ENCODE measurements at regions of chr17 and their contacts with region 1.

Region 1: DNA sequence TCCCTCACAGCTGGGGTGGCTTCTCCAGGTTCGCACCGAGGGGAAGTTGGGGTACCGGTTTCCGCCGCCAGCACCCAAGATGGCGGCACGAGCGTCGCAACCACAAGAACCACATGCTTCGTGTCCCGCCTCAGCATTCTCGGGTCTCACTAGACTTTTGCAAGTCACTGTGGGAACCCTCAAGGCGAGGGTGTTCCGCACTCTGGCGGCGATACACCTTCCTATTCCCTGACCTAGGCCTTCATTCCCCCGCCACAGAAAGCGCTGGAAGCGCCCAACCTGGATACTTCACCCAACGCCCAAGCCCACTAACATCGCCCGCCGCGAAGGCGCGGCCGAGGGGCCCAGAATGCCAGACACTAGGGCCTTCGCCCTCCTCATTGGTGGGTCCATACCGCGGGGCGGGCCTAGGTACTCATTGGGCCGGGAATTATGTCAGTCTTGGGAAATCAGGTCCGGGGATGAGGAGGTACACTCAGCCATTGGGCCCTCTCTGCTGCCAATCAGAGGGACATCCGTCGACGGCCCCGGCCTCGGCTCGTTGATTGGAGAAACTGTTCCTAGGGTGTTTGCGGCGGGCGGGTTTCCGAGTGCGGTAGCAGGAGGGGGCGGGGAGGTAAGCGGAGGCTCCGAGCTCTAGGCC is at the start of gene NFE2L1:
- DNase-seq: peak; percentile 97

Region 2: DNA sequence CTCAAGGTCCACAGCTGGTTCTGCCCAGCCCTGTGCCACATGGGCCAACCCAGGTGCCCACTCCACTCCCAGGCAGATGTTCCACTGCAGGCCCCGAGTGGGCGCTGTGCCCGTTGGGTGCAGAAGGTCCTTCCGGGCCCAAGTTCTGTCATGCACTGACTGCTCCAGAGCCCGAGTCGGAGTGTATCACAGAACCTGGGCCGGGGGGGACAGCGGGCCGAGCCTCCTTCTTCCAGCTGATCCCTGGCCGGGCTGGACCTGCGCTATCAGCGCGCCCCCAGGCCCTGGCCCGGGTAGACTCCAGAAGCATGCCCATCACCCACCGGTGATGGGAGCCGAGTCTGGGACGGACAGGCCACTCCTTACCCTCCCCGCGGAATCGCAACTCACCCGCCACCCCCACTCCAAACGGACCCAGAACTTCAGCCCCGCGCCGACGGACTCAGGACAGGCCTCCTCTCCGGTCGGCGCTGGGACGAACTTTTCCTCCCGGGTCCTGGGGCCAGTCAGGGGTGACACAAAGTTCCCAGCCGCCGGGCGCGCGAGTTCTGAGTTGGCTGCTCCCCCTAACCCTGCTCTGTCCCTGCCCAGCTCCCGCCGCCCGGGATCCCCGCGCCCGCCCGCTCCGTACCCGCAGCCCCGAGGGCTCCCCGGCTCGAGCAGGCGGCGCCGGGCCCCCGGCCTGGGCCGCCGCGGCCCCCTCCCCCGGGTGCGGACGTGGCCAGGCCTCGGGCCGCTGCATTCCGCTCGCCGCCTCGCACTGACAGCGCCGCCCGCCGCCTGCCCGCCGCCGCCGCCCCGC is 10.6 kb before region 1 on chr17 and contains the start of gene COPZ2:
- CTCF ChIA-PET with region 1: no interaction called
- POLR2A ChIA-PET with region 1: interaction called, 121 read pairs
- DNase-seq: no peak

Region 3: DNA sequence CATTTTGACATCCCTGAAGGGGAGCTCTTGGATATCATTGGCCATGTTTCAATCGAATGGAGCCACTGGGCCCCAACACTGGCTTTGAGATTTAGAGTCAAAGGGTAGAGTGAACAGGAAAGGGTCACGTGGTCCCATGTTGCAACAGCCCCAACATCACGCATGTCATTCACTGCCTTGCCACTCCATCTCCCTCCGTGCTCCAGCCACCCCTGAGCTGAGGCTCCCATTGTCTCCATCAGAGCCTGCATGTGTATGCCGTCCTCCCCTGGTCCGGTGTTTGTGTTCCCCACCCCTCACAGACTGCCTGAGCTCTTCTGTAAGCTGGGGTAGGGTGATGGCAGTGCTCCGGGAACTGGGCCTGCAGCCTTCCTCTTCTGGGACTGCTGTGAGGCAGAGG is 12.4 kb after region 1 on chr17:
- CTCF ChIA-PET with region 1: interaction called, 4 read pairs
- POLR2A ChIA-PET with region 1: interaction called, 64 read pairs
- DNase-seq: no peak

Region 4: DNA sequence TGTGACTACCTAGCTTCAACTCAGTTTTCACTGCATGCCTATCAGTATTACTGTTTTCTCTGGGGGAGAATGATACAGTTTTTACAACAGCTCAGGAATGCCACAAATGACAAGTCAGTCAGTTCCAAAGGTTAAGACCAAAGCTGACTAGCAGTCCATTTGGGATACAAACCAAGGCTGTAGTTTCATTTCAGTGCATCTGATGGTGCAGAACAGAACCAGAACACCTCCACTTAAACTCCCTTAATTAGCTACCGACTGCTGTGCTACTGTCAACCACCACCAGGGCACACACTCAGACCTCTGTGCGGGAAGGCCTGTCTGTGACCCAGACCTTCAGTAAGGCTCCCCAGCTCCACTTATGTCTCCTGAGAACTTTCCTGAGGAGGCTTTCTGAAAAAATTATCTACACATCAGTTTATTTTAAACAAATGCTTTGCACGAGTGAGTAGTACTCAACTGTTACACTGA is 20.7 kb after region 1 on chr17:
- CTCF ChIA-PET with region 1: no interaction called
- POLR2A ChIA-PET with region 1: interaction called, 64 read pairs
- DNase-seq: peak; percentile 58

Region 5: GRCh38 chr17:48084932-48085444 is 37.1 kb after region 1 on chr17:
- CTCF ChIA-PET with region 1: interaction called, 9 read pairs
- POLR2A ChIA-PET with region 1: interaction called, 10 read pairs
- DNase-seq: no peak

Region 6: DNA sequence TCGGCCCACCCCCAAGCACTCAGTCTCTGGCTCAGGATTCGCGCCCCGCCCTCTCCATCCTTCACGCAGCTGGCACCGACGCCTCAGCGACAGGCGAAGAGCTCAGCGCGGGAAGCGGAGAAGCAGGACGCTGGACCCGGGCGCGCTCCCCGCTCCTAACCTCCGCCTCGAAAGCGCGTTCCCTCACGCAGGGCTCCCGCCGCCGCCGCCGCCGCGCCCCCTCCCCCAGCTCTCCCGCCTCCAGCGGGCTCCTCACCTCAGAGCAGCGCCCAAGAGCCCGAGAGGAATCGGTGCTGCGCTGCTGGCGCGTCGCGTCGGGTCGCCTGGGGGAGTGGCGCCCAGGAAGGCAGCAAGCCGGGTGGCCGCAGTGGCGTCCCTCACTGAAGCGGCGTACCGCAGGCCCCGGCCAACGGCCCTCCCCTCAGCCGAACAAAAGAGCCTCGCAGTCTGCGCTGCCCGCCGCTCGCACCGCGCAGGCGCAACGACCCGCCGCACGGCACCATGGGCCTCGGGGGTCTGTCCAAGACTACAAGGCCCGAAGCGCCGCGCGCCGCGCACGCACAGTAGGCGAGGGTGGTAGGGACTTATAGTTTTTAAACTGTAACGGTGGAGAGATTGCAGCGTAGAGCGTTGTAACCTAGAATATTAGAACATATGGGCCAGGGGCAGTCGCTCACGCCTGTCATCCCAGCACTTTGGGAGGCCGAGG is 53.3 kb after region 1 on chr17 and contains the start of gene CBX1:
- CTCF ChIA-PET with region 1: no interaction called
- POLR2A ChIA-PET with region 1: interaction called, 11 read pairs
- DNase-seq: peak; percentile 95

Region 7: GRCh38 chr17:48107168-48108132 is 59.6 kb after region 1 on chr17 and contains the start of gene SNX11:
- CTCF ChIA-PET with region 1: no interaction called
- POLR2A ChIA-PET with region 1: interaction called, 19 read pairs
- DNase-seq: peak; percentile 89

Region 8: DNA sequence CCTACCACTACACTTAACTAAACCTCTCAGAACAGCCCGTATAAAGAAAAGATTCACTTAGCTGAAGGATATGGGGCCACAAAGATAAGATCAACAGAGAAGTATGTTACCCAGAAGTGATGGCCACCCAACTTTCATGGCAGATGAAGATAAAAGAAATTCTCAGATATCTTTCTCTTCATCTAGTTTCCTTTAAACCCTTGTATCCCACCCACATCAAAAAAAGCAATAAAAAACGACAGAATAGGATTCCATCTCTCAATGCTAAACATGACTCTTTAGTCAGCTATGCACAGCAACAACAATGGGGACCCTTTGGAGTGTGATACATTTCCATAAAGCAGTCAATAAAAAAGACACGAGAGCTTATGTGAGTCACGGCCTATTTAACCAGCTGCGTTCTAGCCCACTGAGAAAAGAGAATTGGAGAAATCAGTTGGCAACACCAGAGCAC is 146.3 kb after region 1 on chr17:
- CTCF ChIA-PET with region 1: no interaction called
- POLR2A ChIA-PET with region 1: no interaction called
- DNase-seq: no peak